Left lung (tissue), 14 donors: ENCODE measurements at regions of chr3 and their contacts with region 1.

Region 1: GRCh38 chr3:37210230-37210629 is 35.8 kb upstream of the LRRFIP2 start:
- DNase-seq: no peak
- ATAC-seq: no peak
- H3K4me3 ChIP-seq: no peak overlapping the region
- H3K27ac ChIP-seq: no peak overlapping the region
- H3K4me1 ChIP-seq: peaks cover 0 to 5% of the 10 kb centered on the region in 2 donors
- H3K27me3 ChIP-seq: no peaks in the 10 kb centered on the region
- CTCF ChIP-seq: no peak

Region 2: DNA sequence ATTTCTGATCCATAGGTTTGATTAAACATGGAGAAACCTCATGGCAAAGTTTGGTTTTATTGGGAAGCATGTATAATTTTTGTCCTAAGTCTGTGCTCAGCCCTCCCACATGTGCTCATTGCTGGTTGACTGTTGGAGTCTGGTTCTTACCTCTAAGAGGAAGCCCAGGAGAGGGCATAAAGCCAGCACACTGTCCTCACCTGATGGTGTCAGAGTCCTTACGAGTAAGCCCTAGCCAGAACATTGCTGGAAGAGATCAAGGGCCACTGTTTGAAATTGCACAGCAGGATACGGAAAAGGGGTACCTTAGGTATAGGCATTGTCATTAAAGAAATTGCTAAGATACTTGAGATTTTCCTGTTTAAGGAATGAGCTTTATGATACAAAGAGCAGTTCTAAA is 195.6 kb before region 1 on chr3:
- intact Hi-C with region 1: loop called in 1 of 2 experiments (anchors 10 kb)
- DNase-seq: no peak
- ATAC-seq: no peak
- H3K4me3 ChIP-seq: no peak overlapping the region
- H3K27ac ChIP-seq: no peak overlapping the region
- H3K4me1 ChIP-seq: no peaks in the 10 kb centered on the region
- H3K27me3 ChIP-seq: no peaks in the 10 kb centered on the region
- CTCF ChIP-seq: no peak

Region 3: DNA sequence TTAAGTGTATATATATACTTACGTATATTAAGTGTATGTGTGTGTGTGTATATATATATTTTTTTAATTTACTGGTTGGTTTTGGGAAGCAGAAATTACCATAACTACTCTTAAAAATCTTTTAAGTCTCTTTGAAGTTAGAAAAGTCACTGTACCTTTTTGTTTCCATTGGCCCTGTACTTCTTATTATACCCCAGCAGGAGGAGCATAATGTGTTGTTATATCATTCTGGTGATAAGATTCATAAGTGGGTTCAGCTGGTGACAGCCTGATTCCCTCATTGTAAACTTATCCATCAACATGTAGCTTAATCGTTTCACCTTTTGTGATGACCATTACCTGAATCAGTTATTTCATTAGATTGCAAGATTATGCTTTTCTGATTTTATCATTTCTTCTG is 186.1 kb before region 1 on chr3:
- intact Hi-C with region 1: loop called (anchors 5 to 10 kb)
- DNase-seq: no peak
- ATAC-seq: no peak
- H3K4me3 ChIP-seq: no peak overlapping the region
- H3K27ac ChIP-seq: peak overlapping the region in 1 of 2 donors; percentile 65
- H3K4me1 ChIP-seq: peaks cover 2 to 11% of the 10 kb centered on the region in 2 donors
- H3K27me3 ChIP-seq: no peaks in the 10 kb centered on the region
- CTCF ChIP-seq: peak in 1 of 2 donors; percentile 19

Region 4: DNA sequence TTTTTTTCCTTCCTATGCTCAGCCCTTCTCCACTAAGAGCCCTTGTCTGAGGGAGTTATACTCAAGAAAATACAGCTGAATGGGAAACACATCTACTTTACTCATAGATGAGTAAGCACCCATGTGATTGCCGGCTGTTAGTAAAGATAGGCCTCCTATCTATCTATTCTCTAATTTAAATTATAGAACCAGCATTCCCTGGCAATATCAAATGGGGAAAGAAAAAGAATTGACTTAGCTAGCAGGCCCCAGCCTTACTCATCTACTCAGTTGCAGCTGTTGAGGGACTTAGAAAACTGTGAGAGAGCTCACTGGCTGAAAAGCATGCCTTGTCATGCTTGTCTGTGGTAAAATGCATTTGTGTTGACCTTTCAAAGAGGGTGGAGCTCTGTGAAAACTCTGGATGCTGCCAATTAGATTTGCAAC is 81.1 kb after region 1 on chr3:
- intact Hi-C with region 1: no loop called
- DNase-seq: no peak
- ATAC-seq: peak; percentile 65
- H3K4me3 ChIP-seq: no peak overlapping the region
- H3K27ac ChIP-seq: no peak overlapping the region
- H3K4me1 ChIP-seq: peaks cover 0 to 7% of the 10 kb centered on the region in 2 donors
- H3K27me3 ChIP-seq: no peaks in the 10 kb centered on the region
- CTCF ChIP-seq: no peak

Region 5: DNA sequence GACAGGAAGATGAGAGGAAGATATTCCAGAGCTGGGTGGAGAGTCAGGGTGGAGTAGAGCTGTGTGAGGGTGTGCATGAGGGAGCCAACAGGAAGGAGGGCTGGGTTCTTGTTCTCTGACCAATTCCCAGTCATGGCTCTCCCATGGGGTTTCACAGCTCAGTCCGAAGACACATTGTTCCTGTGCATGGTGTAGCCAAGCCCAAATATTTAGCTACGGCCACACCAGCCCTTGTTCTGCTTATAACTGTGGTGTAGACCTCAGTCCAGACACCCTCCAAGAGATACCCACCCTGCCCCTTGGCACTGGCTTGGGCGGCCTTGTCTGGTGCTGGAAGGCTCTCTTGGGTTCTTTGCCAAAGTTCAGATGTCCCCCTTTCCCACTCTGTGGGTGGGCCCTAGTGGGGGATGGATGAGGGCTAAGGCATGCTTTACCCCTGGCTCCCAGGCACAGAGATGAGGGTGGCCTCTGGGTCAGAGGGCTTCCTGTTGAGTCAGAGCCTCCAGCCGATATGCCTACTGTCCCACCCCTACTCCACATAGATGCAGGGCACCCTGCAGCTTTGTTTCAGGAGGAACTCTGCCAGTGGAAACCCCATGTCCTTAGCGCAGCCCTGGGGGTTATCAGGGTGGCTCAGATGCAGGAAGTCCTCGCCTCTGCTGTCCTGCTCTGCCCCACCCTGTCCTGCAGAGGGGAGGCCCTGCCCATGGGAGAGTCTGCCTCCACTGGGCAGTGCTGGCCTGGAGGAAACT is 380.3 kb after region 1 on chr3:
- intact Hi-C with region 1: no loop called
- DNase-seq: no peak
- ATAC-seq: peak; percentile 41
- H3K4me3 ChIP-seq: no peak overlapping the region
- H3K27ac ChIP-seq: peak overlapping the region in 1 of 2 donors; percentile 72
- H3K4me1 ChIP-seq: peaks cover 7 to 11% of the 10 kb centered on the region in 2 donors
- H3K27me3 ChIP-seq: no peaks in the 10 kb centered on the region
- CTCF ChIP-seq: no peak